Activated B cell treated with CpG ODN at 0.5 μM for 24 hours (primary cell): ENCODE measurements at regions of chr11 and their contacts with region 1.

Region 1: GRCh38 chr11:124953753-124954589 is at the start of gene CCDC15:
- DNase-seq: peak; percentile 88
- ATAC-seq: peak; percentile 100
- H3K4me3 Mint-ChIP-seq: no peak within 1 kb of the TSS
- H3K27ac Mint-ChIP-seq: no peak within 1 kb of the TSS
- H3K4me1 Mint-ChIP-seq: no peaks in the 10 kb centered on the region
- H3K27me3 Mint-ChIP-seq: peaks cover 4% of the 10 kb centered on the region
- CTCF ChIP-seq: no peak
- total RNA-seq, gene CCDC15: 0.51 and 0.71 TPM in 2 replicates

Region 2: DNA sequence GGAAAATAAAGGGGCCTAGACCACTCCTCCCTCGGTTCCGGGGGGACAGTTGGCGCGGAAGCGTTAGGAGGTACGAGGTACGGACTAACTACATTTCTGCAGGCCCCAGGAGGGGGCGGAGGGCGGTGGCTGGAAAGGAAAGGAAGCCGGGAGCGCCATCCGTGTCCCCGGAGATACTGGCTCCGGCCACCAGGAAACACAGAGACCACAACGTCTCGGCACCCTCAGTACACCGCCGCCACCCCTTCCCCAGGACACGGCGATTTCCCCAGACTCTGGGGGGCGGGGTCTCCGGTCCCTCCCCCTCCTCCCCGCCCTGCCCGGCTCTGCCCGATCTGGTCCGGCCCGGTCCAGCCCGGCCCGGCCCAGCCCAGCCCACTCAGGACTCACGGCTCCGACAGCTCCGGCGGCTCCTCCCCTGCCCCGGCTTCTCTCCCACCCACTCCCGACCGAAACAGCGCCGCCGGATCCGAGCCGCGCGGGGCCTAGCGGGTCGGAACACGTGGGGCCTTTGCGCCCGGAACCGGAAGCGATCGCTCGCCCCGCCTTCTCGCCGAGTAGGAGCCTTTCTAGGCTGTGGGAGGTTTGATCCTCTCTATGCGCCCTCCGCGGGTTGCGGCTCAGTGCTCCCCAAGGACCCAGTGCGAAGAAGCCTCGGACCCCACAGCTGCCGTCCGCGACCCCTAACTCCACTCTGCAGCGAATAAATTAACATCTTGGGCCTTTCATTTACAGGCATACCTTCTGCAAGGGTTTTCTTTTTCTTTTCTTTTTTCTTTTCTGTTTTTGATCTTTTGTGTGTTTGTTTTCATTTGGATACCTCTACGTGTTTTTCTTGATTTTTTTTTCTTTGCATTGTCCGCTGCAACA is 1212.6 kb before region 1 on chr11 and contains the start of gene ZNF202:
- CTCF ChIA-PET with region 1: no interaction called
- POLR2A ChIA-PET with region 1: no interaction called
- intact Hi-C with region 1: loop called (anchors 2 kb)
- DNase-seq: peak; percentile 91
- ATAC-seq: peak; percentile 92
- H3K4me3 Mint-ChIP-seq: peak within 1 kb of the TSS; percentile 88
- H3K27ac Mint-ChIP-seq: peak within 1 kb of the TSS; percentile 90
- H3K4me1 Mint-ChIP-seq: peaks cover 30% of the 10 kb centered on the region
- H3K27me3 Mint-ChIP-seq: peaks cover 6% of the 10 kb centered on the region
- CTCF ChIP-seq: no peak
- total RNA-seq, gene ZNF202: 23.3 and 27.8 TPM in 2 replicates

Region 3: DNA sequence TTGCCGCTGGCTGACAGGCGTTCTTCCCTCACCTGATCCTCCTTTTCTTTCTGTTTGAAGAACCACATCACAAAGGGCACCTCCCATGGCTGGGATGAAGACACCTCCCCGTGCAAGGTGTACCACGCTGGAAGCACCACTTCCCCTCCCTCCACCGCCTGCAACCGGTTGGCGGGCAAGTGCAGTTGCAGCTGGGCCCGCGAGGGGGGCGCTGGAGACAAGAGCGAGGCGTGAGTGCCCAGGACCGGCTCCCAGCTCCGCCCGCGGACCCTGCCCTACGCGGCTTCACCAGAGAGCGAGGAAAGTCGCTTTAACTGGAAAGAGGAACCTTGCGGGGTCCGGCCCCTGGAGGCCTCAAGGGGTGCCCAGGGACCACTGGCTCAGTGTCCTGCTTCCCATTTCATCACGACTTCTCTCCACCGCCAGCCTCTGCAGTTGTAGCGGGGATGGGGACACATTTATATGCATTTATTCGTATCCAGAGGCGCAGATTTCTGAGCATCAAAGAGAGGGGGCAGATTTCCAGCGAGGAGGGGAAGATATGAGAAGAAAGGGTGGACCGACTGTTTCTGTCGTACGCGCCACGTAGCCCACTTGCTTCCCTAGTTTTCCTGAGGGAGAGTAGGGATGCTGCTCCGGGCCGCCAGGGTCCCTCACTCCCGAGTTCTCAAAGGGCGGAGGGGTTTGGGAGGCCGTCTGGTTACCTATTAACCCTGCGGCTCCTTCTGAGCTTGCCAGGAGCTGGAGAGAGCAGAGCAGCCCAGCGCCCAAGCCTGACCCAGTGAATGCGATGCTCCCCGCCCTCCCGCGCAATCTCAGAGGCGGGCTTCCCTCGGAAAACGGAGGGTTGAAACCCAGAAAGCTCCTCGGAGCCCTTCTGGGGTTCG is 195.4 kb before region 1 on chr11:
- CTCF ChIA-PET with region 1: interaction called, 3 read pairs
- POLR2A ChIA-PET with region 1: no interaction called
- intact Hi-C with region 1: loop called (anchors 5 kb)
- DNase-seq: peak; percentile 72
- ATAC-seq: peak; percentile 67
- H3K4me3 Mint-ChIP-seq: peak overlapping the region; percentile 79
- H3K27ac Mint-ChIP-seq: peak overlapping the region; percentile 60
- H3K4me1 Mint-ChIP-seq: peaks cover 46% of the 10 kb centered on the region
- H3K27me3 Mint-ChIP-seq: peaks cover 2% of the 10 kb centered on the region
- CTCF ChIP-seq: no peak

Region 4: GRCh38 chr11:124829986-124830385 is 124.0 kb before region 1 on chr11:
- CTCF ChIA-PET with region 1: no interaction called
- POLR2A ChIA-PET with region 1: no interaction called
- intact Hi-C with region 1: no loop called
- DNase-seq: no peak
- ATAC-seq: no peak
- H3K4me3 Mint-ChIP-seq: no peak overlapping the region
- H3K27ac Mint-ChIP-seq: no peak overlapping the region
- H3K4me1 Mint-ChIP-seq: no peaks in the 10 kb centered on the region
- H3K27me3 Mint-ChIP-seq: peaks cover 6% of the 10 kb centered on the region
- CTCF ChIP-seq: no peak

Region 5: GRCh38 chr11:124875943-124876817 is 77.8 kb before region 1 on chr11:
- CTCF ChIA-PET with region 1: no interaction called
- POLR2A ChIA-PET with region 1: no interaction called
- intact Hi-C with region 1: loop called (anchors 1 kb)
- DNase-seq: peak; percentile 67
- ATAC-seq: peak; percentile 96
- H3K4me3 Mint-ChIP-seq: peak overlapping the region; percentile 85
- H3K27ac Mint-ChIP-seq: no peak overlapping the region
- H3K4me1 Mint-ChIP-seq: peaks cover 18% of the 10 kb centered on the region
- H3K27me3 Mint-ChIP-seq: peaks cover 69% of the 10 kb centered on the region
- CTCF ChIP-seq: peak; percentile 45

Region 6: GRCh38 chr11:124886476-124886875 is 67.5 kb before region 1 on chr11:
- CTCF ChIA-PET with region 1: no interaction called
- POLR2A ChIA-PET with region 1: no interaction called
- intact Hi-C with region 1: no loop called
- DNase-seq: no peak
- ATAC-seq: no peak
- H3K4me3 Mint-ChIP-seq: no peak overlapping the region
- H3K27ac Mint-ChIP-seq: no peak overlapping the region
- H3K4me1 Mint-ChIP-seq: no peaks in the 10 kb centered on the region
- H3K27me3 Mint-ChIP-seq: peaks cover 17% of the 10 kb centered on the region
- CTCF ChIP-seq: no peak

Region 7: GRCh38 chr11:125070699-125071254 is 116.8 kb after region 1 on chr11:
- CTCF ChIA-PET with region 1: no interaction called
- POLR2A ChIA-PET with region 1: interaction called, 6 read pairs
- intact Hi-C with region 1: loop called (anchors 1 kb)
- DNase-seq: no peak
- ATAC-seq: peak; percentile 69
- H3K4me3 Mint-ChIP-seq: peak overlapping the region; percentile 40
- H3K27ac Mint-ChIP-seq: peak overlapping the region; percentile 82
- H3K4me1 Mint-ChIP-seq: peaks cover 71% of the 10 kb centered on the region
- H3K27me3 Mint-ChIP-seq: peaks cover 2% of the 10 kb centered on the region
- CTCF ChIP-seq: no peak

Region 8: DNA sequence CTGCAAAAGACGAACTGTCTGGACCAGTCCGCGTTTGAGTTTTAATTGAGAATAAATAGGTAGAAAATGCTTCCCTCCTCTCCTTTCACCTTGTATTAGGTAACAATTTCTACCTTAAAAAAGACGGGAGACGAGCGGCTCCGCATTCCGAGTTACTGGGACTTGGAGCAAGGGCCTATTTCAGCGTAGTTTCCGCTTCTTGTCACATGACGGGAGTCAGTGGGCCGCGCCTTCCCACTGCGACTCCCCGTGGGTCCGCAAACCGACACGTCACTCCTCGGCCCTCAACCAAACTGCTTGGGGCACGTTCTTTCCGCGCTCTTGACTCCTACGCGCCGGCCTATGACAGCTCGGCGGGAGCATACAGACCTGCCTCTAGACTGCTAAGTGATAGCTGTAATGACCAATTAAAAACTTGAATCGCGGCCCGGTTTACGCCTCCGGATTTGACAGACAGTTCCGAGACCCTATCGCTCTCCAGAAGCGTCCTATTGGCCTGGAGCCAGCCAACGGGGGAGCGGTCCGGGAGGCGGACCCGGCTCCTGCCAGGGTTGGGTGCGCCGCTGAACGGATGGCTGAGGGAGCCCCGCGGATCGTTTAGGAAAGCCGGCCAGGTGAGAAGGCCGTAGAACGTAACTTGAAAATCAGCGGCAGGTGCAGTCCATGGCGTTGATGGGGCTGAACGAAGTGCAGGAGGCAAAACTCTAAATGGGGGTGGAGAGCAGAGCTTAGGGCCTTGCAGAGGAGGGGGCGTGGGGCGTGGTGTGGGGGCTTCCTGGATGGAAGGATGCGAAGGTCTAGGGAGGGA is 638.5 kb after region 1 on chr11 and contains the start of gene STT3A:
- CTCF ChIA-PET with region 1: no interaction called
- POLR2A ChIA-PET with region 1: interaction called, 12 read pairs
- intact Hi-C with region 1: loop called (anchors 1 kb)
- DNase-seq: peak; percentile 90
- ATAC-seq: peak; percentile 92
- H3K4me3 Mint-ChIP-seq: peak within 1 kb of the TSS; percentile 95
- H3K27ac Mint-ChIP-seq: peak within 1 kb of the TSS; percentile 99
- H3K4me1 Mint-ChIP-seq: peaks cover 58% of the 10 kb centered on the region
- H3K27me3 Mint-ChIP-seq: no peaks in the 10 kb centered on the region
- CTCF ChIP-seq: no peak
- total RNA-seq, gene STT3A: 79.4 and 86.5 TPM in 2 replicates

Region 9: GRCh38 chr11:126211235-126212088 is 1257.5 kb after region 1 on chr11 and contains the starts of genes FAM118B and RPUSD4:
- CTCF ChIA-PET with region 1: no interaction called
- POLR2A ChIA-PET with region 1: no interaction called
- intact Hi-C with region 1: loop called (anchors 5 kb)
- DNase-seq: peak; percentile 99
- ATAC-seq: peak; percentile 93
- H3K4me3 Mint-ChIP-seq: peak within 1 kb of the TSS; percentile 99
- H3K27ac Mint-ChIP-seq: peak within 1 kb of the TSS; percentile 97
- H3K4me1 Mint-ChIP-seq: peaks cover 28% of the 10 kb centered on the region
- H3K27me3 Mint-ChIP-seq: no peaks in the 10 kb centered on the region
- CTCF ChIP-seq: no peak
- total RNA-seq, gene FAM118B: 8.7 and 11.7 TPM in 2 replicates
- total RNA-seq, gene RPUSD4: 48.8 and 58.2 TPM in 2 replicates